Right ventricle myocardium inferior (tissue), 1 donor: ENCODE measurements at regions of chr1 and their contacts with region 1.

Region 1: GRCh38 chr1:56821140-56821797 is 2.1 kb upstream of the FYB2 start:
- DNase-seq: peak; percentile 76
- ATAC-seq: peak; percentile 54

Region 2: DNA sequence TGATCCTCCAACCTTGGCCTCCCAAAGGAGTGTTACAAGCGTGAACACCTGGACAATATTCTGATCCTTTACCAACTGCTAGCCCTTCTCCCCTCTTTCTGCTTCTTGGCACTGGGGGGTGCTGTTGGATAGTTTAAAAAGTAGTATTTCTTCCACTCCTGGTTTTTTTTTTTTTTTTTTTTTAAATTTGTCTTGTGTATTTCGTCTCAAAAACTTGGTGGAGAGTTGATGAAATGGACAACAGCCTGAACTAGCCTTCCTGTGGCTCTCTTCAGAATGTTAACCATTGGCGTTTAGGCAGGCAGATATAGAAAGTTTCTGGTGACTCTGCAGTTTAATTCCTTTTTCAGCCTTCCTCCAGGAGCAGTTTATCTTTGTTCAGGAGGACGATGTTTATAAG is 1536.4 kb before region 1 on chr1:
- intact Hi-C with region 1: loop called (anchors 10 kb)
- DNase-seq: no peak
- ATAC-seq: peak; percentile 62

Region 3: DNA sequence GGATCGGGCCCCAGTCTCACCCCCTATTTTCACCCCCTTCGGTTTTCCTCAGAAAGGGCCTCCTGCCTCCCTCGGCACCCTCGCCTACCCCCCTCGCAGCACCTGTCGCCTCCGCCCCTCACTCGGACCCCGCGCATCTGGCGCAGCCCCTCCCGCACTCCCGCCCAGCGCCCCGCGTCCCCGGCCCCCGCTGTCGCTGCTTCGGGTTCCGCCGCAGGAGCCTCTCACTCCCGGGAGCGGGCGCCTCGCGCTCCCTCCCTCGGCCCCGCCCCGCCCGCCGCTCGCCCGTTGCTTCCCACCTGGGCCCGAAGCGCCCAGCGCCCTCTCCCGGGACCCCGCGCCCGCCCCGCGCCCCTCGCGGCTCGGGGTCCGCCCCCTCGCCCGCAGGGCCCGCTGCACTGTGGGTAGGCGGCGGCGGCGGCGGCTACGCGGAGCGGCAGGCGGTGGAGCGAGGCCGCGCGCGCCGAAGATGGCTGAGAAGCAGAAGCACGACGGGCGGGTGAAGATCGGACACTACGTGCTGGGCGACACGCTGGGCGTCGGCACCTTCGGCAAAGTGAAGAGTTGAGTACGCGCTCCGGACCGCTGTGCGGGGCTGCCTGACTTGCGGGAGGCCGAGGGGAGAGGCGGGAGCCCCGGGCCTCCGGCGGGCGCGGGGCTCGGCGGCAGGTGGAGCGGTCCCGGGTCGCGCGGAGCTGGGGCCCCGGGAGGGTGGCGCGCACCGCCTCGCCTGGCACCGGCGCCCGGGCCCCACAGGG is 176.2 kb before region 1 on chr1 and contains the start of gene PRKAA2:
- intact Hi-C with region 1: loop called (anchors 10 kb)
- DNase-seq: peak; percentile 73
- ATAC-seq: peak; percentile 89
- total RNA-seq, gene PRKAA2: 77.9 TPM

Region 4: GRCh38 chr1:56758135-56758534 is 63.1 kb before region 1 on chr1:
- intact Hi-C with region 1: loop called (anchors 1 kb)
- DNase-seq: no peak
- ATAC-seq: peak; percentile 59